ENCODE measurements at regions of chr1 and their contacts with region 1.

Region 1: GRCh38 chr1:23916209-23917131 is 3.3 kb upstream of the CNR2 start:
- DNase-seq: peak; percentile 70
- H3K4me3 ChIP-seq: no peak overlapping the region
- H3K27ac ChIP-seq: no peak overlapping the region
- H3K4me1 ChIP-seq: no peaks in the 10 kb centered on the region
- H3K27me3 ChIP-seq: no peaks in the 10 kb centered on the region
- CTCF ChIP-seq: peak; percentile 69 to 78

Region 2: DNA sequence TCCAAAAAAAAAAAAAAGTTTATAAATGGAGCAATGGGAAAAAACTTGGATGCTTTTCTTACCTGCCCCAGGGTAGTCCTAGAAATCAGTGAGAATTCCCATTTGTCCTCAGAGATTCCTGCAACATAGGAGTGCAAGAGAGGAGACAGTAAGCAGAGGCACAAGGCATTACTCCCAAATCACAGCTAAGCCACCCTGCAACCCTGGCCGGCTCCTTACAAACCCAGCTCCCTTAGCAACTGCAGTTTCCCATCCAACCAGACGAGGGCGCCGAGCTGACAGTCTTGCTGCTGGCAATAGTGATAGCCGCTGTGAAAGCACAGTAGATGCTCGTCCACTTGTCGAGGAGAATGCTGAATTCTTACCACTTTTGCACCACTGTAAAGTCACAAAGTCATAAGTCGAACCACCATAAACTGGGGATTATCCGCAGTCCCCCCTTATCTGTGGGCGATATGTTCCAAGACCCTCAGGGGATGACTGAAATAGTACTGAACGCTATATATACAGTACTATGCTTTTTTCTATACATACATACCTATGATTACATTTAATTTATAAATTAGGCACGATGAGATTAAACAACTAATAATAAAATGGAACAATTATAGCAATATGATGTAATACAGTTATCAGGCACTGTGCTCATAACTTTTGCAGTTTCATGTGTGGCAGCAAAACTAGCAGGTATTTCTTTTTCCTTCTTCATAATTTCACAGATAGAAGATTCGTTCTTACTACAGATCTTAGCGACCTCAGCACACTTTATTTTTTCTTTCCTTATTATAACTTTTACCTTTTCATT is 144.2 kb before region 1 on chr1:
- CTCF ChIA-PET with region 1: interaction called, 14 read pairs
- dilution Hi-C with region 1: no loop called
- in situ Hi-C with region 1: no loop called
- intact Hi-C with region 1: loop called (anchors 1 kb)
- DNase-seq: peak; percentile 66
- H3K4me3 ChIP-seq: no peak overlapping the region
- H3K27ac ChIP-seq: no peak overlapping the region
- H3K4me1 ChIP-seq: peaks cover 2% of the 10 kb centered on the region
- H3K27me3 ChIP-seq: no peaks in the 10 kb centered on the region
- CTCF ChIP-seq: peak; percentile 97 to 99

Region 3: GRCh38 chr1:23800400-23801337 is 115.8 kb before region 1 on chr1 and contains the start of gene GALE:
- CTCF ChIA-PET with region 1: no interaction called
- dilution Hi-C with region 1: no loop called
- in situ Hi-C with region 1: loop called in 1 of 2 experiments (anchors 10 kb)
- intact Hi-C with region 1: no loop called
- DNase-seq: peak; percentile 94
- H3K4me3 ChIP-seq: peak within 1 kb of the TSS; percentile 72 to 89 (median 77)
- H3K27ac ChIP-seq: peak within 1 kb of the TSS; percentile 75
- H3K4me1 ChIP-seq: peaks cover 21% of the 10 kb centered on the region
- H3K27me3 ChIP-seq: no peaks in the 10 kb centered on the region
- CTCF ChIP-seq: no peak
- total RNA-seq, gene GALE: 24.2 to 84.5 TPM

Region 4: DNA sequence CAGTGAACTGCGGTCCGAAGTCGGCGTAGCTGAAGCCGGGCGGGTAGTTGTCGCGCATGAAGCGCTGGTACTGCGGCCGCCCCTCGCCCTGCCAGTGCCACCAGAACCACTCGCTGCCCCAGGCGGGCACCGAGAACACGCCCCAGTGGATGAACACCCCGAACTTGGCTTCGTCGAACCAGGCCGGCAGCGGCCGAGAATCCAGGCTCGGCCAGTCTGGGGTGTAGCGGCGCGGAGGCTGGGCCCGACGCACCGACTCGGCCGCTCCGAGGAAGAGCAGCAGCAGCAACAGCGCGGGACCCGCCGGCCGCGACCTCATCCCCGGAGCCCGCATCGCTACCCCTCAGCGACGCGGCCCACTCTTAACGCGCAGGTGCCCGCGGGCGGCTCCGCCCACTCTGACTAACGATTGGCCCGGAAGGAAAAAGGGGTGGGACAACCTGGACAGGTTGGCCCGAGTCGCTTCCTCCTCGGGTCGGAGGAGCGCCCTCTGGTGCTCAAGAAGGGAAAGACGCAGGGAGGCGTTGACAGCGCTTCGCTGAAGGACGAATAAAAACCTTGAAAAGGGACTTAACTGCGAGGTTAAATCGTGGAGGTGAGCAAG is 48.4 kb before region 1 on chr1 and contains the start of gene FUCA1:
- CTCF ChIA-PET with region 1: no interaction called
- dilution Hi-C with region 1: loop called (anchors 5 kb)
- in situ Hi-C with region 1: no loop called
- intact Hi-C with region 1: loop called (anchors 1 kb)
- DNase-seq: peak; percentile 82
- H3K4me3 ChIP-seq: peak within 1 kb of the TSS; percentile 36 to 71 (median 56)
- H3K27ac ChIP-seq: no peak within 1 kb of the TSS
- H3K4me1 ChIP-seq: peaks cover 29% of the 10 kb centered on the region
- H3K27me3 ChIP-seq: no peaks in the 10 kb centered on the region
- CTCF ChIP-seq: peak; percentile 95 to 97
- total RNA-seq, gene FUCA1: 3.3 to 9.9 TPM

Region 5: DNA sequence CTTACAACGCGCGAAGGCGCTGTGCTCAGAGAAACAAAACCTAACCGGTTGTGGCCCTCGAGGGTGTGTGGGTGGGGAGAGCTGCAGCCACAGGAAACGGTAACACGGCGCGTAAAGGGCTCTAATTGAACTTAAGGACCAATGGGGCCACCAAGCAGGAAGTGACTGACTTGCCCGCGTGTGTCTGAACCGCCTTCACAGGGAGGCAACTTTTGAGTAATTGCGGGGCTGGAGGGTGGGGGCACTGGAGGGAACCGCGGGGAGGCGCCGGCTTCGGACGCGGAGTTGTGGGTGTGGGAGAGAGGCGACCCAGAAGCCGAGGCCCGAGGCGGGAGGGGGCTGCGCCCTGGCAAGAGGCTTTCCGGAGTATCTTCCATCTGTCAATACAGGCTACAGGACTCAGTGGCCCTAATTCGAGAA is 42.6 kb after region 1 on chr1:
- CTCF ChIA-PET with region 1: no interaction called
- dilution Hi-C with region 1: loop called (anchors 5 kb)
- in situ Hi-C with region 1: no loop called
- intact Hi-C with region 1: loop called (anchors 5 kb)
- DNase-seq: peak; percentile 88
- H3K4me3 ChIP-seq: peak overlapping the region; percentile 71 to 99 (median 96)
- H3K27ac ChIP-seq: peak overlapping the region; percentile 95
- H3K4me1 ChIP-seq: peaks cover 37% of the 10 kb centered on the region
- H3K27me3 ChIP-seq: no peaks in the 10 kb centered on the region
- CTCF ChIP-seq: peak in 1 of 2 donors; percentile 44

Measured in mammary epithelial cell (primary cell).